ENCODE measurements at regions of chr9 and their contacts with region 1.

Region 1: GRCh38 chr9:115373000-115373709 is 255.2 kb upstream of the TNC start:
- DNase-seq: peak; percentile 77 to 95
- H3K4me3 ChIP-seq: peak overlapping the region; percentile 31; the same call in 1 of the 2 replicates
- H3K27ac ChIP-seq: peak overlapping the region; percentile 90
- H3K4me1 ChIP-seq: peaks cover 33% of the 10 kb centered on the region
- H3K27me3 ChIP-seq: no peaks in the 10 kb centered on the region
- CTCF ChIP-seq: no peak

Region 2: DNA sequence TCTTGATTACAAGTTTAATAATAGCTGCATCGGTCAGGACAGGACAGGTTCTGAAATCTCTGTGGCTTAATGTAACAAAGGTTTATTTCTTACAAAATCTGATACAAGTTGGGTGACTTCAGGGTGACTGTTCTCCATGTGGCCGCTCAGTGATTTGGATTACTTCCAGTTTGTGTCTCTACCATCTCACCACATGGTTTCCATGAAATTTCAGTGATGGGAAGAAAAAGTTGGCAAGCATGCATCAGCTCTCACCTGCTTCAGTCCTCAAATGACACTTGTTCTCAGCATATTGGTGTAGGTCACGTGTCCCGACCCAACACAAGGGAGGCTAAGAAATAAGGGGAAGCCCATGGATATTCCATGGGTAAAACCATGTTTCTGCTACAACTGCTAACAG is 769.9 kb before region 1 on chr9:
- CTCF ChIA-PET with region 1: no interaction called
- POLR2A ChIA-PET with region 1: interaction called, 12 read pairs
- intact Hi-C with region 1: no loop called
- DNase-seq: no peak
- H3K4me3 ChIP-seq: no peak overlapping the region
- H3K27ac ChIP-seq: no peak overlapping the region
- H3K4me1 ChIP-seq: no peaks in the 10 kb centered on the region
- H3K27me3 ChIP-seq: no peaks in the 10 kb centered on the region
- CTCF ChIP-seq: no peak

Region 3: DNA sequence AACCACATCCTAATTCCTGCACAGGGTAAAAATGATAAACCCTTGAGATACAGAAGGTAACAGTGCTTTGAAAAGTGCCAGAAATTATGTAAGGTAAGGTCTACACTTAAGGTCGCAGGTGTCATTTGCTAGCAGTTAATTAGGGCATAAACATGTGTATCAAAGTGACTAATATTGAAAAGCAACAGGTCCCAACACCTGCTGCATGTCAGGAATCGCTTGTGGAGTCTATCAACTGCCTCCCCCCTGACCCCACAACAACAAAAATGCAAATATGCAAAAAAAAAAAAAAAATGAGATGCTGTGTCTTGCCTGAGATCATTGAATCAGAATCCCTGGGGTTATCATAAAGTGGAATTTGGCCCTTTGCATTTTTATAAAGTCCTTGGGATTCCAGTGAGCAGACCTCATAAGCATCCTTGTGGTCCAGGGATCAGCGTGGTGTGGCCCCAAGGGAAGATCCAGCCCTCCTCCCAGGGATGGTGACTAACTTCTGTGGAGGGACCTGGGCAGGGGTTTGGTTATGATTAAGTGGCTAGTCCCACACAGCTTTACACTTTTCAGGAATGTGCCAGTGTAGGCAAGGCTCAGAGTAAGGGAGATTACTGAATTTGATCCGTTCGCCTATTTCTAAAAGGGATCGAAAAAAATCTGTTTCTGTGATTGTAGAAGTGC is 350.3 kb before region 1 on chr9:
- CTCF ChIA-PET with region 1: no interaction called
- POLR2A ChIA-PET with region 1: no interaction called
- intact Hi-C with region 1: loop called (anchors 1 kb)
- DNase-seq: no peak
- H3K4me3 ChIP-seq: no peak overlapping the region
- H3K27ac ChIP-seq: no peak overlapping the region
- H3K4me1 ChIP-seq: peaks cover 14% of the 10 kb centered on the region
- H3K27me3 ChIP-seq: no peaks in the 10 kb centered on the region
- CTCF ChIP-seq: no peak

Region 4: GRCh38 chr9:115164511-115164974 is 208.6 kb before region 1 on chr9:
- CTCF ChIA-PET with region 1: no interaction called
- POLR2A ChIA-PET with region 1: no interaction called
- intact Hi-C with region 1: loop called (anchors 5 kb)
- DNase-seq: peak; percentile 81 to 84
- H3K4me3 ChIP-seq: no peak overlapping the region
- H3K27ac ChIP-seq: no peak overlapping the region
- H3K4me1 ChIP-seq: peaks cover 23% of the 10 kb centered on the region
- H3K27me3 ChIP-seq: no peaks in the 10 kb centered on the region
- CTCF ChIP-seq: no peak

Region 5: DNA sequence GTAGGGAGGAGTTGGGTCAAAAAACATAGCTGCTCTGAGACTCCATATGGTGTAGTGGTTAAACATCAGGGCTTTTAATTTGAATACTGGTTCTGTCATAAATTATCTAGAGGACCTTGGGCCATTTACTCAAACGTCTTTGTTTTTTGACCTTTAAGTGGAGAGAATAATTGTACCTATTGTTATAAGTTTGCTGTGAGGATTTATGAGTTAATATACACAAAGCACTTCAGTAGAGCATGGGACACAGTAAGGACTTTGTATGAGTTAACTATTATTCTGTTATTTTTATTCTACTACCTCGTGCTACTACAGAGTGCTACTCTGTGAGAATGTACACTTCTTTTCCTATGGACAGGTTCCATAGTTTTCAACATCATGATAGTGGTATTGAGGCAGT is 131.5 kb before region 1 on chr9:
- CTCF ChIA-PET with region 1: no interaction called
- POLR2A ChIA-PET with region 1: no interaction called
- intact Hi-C with region 1: no loop called
- DNase-seq: no peak
- H3K4me3 ChIP-seq: no peak overlapping the region
- H3K27ac ChIP-seq: no peak overlapping the region
- H3K4me1 ChIP-seq: no peaks in the 10 kb centered on the region
- H3K27me3 ChIP-seq: no peaks in the 10 kb centered on the region
- CTCF ChIP-seq: no peak

Region 6: GRCh38 chr9:115262477-115262876 is 110.7 kb before region 1 on chr9:
- CTCF ChIA-PET with region 1: no interaction called
- POLR2A ChIA-PET with region 1: no interaction called
- intact Hi-C with region 1: loop called (anchors 1 kb)
- DNase-seq: peak; percentile 99
- H3K4me3 ChIP-seq: no peak overlapping the region
- H3K27ac ChIP-seq: peak overlapping the region; percentile 60
- H3K4me1 ChIP-seq: peaks cover 49% of the 10 kb centered on the region
- H3K27me3 ChIP-seq: no peaks in the 10 kb centered on the region
- CTCF ChIP-seq: no peak

Region 7: GRCh38 chr9:115291841-115292240 is 81.3 kb before region 1 on chr9:
- CTCF ChIA-PET with region 1: no interaction called
- POLR2A ChIA-PET with region 1: no interaction called
- intact Hi-C with region 1: loop called (anchors 1 kb)
- DNase-seq: peak; percentile 79 to 85
- H3K4me3 ChIP-seq: no peak overlapping the region
- H3K27ac ChIP-seq: no peak overlapping the region
- H3K4me1 ChIP-seq: peaks cover 18% of the 10 kb centered on the region
- H3K27me3 ChIP-seq: no peaks in the 10 kb centered on the region
- CTCF ChIP-seq: no peak

Region 8: DNA sequence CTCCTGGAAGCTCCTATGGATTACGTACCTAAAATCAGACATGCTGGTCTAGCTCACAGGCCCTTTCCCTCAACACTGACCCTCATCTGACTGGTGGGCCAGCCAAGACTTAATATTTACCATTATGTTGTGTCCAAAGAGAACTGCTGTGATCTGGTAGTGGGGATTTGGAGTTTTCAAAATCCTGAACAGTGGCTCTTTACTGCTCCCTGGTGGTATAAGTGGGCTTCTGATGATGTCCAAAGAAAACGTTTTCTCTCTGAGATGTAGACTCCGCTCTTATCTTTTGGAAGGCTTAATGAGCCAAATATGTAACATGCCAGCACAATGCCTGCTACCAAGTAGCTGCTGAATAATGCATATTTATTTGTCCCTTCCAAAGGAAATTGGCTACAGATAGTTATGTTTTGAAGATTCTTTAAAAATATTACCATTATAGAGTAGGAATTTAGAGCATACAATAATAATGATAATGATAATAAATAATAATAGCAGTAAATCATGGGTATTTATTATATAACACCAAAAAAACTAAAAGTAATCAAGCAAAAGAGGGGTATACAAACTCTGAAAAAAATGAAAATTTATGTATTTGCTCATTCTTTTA is 151.4 kb after region 1 on chr9:
- CTCF ChIA-PET with region 1: no interaction called
- POLR2A ChIA-PET with region 1: no interaction called
- intact Hi-C with region 1: loop called (anchors 5 kb)
- DNase-seq: peak; percentile 30 to 60
- H3K4me3 ChIP-seq: no peak overlapping the region
- H3K27ac ChIP-seq: no peak overlapping the region
- H3K4me1 ChIP-seq: no peaks in the 10 kb centered on the region
- H3K27me3 ChIP-seq: no peaks in the 10 kb centered on the region
- CTCF ChIP-seq: peak; percentile 84